ENCODE measurements at regions of chr11 and their contacts with region 1.

Region 1: GRCh38 chr11:45097721-45098493 is 48.5 kb upstream of the PRDM11 start:
- DNase-seq: peak; percentile 47
- H3K4me3 ChIP-seq: no peak overlapping the region
- H3K27ac ChIP-seq: no peak overlapping the region
- H3K4me1 ChIP-seq: peaks cover 0 to 7% (median 0%) of the 10 kb centered on the region in 4 donors
- H3K27me3 ChIP-seq: peaks cover 10% of the 10 kb centered on the region
- CTCF ChIP-seq: no peak
- EP300 ChIP-seq: no peak
- POLR2A ChIP-seq: no peak

Region 2: DNA sequence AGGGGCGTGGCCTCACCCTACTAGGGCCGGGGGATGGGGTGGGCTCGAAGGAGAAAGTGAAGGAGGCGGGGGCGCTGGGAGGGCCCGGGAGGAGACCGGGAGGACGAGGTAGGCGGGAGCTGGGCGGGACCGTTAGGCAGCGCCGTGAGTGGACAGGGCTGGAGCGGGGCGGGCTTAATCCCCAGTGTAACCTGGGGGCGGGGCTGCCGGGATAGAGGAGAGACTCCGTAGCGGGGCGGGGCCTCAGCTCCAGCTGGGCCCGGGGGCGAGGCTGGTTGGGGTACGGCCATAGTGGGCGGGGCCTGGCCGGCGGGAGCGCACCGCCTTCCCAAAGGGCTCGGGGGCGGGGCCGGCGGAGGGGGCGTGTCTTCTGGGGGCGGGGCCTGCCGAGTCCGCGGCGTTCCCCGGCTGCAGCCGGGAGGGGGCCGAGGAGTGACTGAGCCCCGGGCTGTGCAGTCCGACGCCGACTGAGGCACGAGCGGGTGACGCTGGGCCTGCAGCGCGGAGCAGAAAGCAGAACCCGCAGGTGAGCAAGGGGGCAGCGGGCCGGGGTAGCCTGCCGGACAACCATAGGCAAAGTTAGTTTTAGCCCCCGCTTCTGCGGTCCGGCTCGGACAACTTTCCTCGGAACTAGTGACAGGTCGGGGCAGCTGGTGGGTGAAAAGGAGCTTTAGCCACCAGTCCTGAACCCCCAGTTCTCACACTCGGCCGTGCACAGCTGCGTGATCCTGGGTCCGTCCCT is 532.5 kb before region 1 on chr11 and contains the start of gene CD82:
- in situ Hi-C with region 1: loop called in 1 of 4 experiments (anchors 25 kb)
- intact Hi-C with region 1: no loop called
- DNase-seq: peak; percentile 100
- H3K4me3 ChIP-seq: peak within 1 kb of the TSS; percentile 31 to 61 (median 46)
- H3K27ac ChIP-seq: peak within 1 kb of the TSS; percentile 92 to 96 (median 94)
- H3K4me1 ChIP-seq: peaks cover 15 to 58% (median 46%) of the 10 kb centered on the region in 4 donors
- H3K27me3 ChIP-seq: no peaks in the 10 kb centered on the region
- CTCF ChIP-seq: peak in 4 of 5 experiments; percentile 38 to 62 (median 45)
- EP300 ChIP-seq: no peak
- POLR2A ChIP-seq: peak; percentile 74
- total RNA-seq, gene CD82: 7.9 to 23.1 (median 14.0) TPM

Region 3: DNA sequence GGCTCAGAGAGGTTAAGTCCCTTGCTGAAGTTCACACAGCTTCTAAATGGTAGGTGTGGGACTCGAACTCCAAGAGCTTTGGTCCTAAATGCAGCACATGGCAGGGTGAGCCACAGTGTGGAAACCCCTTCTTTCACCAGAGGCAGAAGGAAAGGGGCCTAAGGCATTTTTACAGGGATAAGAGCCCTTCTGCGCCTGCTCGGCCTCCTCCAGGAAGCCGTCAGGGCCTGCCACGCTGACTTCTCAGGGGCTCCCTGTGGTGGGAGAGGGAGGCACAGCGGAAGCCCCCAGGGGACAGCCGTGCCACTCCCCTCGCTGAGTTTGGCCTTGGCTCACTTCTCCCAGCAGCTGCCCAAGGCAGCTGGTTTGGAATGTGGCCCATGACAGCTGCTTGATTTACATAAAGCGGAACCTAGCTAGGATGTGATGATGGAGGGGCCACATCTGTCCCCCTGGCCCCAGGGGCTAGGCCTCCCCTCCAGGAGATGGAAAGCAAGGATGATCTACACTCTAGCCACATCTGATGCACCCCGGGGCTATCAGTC is 497.0 kb before region 1 on chr11:
- in situ Hi-C with region 1: no loop called
- intact Hi-C with region 1: loop called (anchors 10 kb)
- DNase-seq: no peak
- H3K4me3 ChIP-seq: no peak overlapping the region
- H3K27ac ChIP-seq: peak overlapping the region in 1 of 4 donors; percentile 22
- H3K4me1 ChIP-seq: peaks cover 7 to 36% (median 30%) of the 10 kb centered on the region in 4 donors
- H3K27me3 ChIP-seq: no peaks in the 10 kb centered on the region
- CTCF ChIP-seq: no peak
- EP300 ChIP-seq: no peak
- POLR2A ChIP-seq: no peak

Region 4: GRCh38 chr11:45079943-45080719 is 17.8 kb before region 1 on chr11:
- in situ Hi-C with region 1: no loop called
- intact Hi-C with region 1: loop called (anchors 1 kb)
- DNase-seq: peak; percentile 51
- H3K4me3 ChIP-seq: no peak overlapping the region
- H3K27ac ChIP-seq: peak overlapping the region; percentile 14 to 69 (median 38)
- H3K4me1 ChIP-seq: peaks cover 12 to 28% (median 16%) of the 10 kb centered on the region in 4 donors
- H3K27me3 ChIP-seq: no peaks in the 10 kb centered on the region
- CTCF ChIP-seq: no peak
- EP300 ChIP-seq: no peak
- POLR2A ChIP-seq: no peak